Activated CD8-positive, alpha-beta T cell treated with anti-CD3 and anti-CD28 coated beads, Interleukin-2, amount 10 ng/mL, durations not matched to agents 7 days and 5 days (primary cell): ENCODE measurements at regions of chr12 and their contacts with region 1.

Region 1: GRCh38 chr12:94207849-94208621 is 59.7 kb downstream of the PLXNC1 start:
- DNase-seq: peak; percentile 51
- ATAC-seq: peak; percentile 77
- H3K4me3 Mint-ChIP-seq: peak overlapping the region; percentile 77
- H3K27ac Mint-ChIP-seq: peak overlapping the region; percentile 97
- H3K4me1 Mint-ChIP-seq: peaks cover 69% of the 10 kb centered on the region
- H3K27me3 Mint-ChIP-seq: no peaks in the 10 kb centered on the region

Region 2: DNA sequence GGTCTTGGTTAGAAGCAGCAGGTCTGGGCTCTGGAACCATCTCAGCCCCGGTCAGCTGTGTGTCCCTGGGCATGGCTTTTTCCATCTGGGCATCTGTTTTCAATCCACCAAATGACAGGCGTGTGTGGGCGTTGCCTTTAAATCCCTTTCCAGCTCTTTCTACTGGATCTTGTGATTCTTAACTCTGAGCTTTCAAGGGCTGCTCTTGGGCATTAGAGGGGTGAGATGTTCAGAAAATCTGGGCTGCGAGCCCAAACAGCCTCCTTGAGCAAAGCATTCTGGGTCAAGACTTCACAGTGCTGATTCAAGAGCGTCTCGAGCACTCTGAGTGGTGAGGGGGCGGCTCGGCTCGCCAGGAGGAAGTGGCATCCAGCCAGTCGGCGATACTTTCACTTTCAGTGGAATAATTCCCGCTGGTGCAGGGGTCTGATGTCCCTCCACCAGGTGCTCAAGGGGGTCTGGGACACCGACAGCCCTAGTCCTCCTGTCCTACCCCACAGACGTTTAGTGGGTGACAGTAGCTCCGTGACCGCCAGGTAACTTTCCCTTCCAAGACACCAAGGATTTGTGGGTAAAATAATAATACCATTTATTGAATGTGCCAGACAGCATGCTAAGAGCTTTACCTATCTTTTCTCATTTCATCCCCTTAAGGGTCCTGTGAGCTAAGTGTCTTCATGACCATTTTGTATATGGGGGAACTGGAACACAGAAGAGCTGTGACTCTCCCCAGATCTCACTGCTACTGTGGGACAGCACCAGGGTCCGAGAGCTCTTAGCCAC is 54.4 kb after region 1 on chr12:
- CTCF ChIA-PET with region 1: interaction called, 7 read pairs
- POLR2A ChIA-PET with region 1: interaction called, 18 read pairs
- DNase-seq: peak; percentile 81
- ATAC-seq: peak; percentile 90
- H3K4me3 Mint-ChIP-seq: peak overlapping the region; percentile 83
- H3K27ac Mint-ChIP-seq: peak overlapping the region; percentile 95
- H3K4me1 Mint-ChIP-seq: peaks cover 58% of the 10 kb centered on the region
- H3K27me3 Mint-ChIP-seq: no peaks in the 10 kb centered on the region

Region 3: DNA sequence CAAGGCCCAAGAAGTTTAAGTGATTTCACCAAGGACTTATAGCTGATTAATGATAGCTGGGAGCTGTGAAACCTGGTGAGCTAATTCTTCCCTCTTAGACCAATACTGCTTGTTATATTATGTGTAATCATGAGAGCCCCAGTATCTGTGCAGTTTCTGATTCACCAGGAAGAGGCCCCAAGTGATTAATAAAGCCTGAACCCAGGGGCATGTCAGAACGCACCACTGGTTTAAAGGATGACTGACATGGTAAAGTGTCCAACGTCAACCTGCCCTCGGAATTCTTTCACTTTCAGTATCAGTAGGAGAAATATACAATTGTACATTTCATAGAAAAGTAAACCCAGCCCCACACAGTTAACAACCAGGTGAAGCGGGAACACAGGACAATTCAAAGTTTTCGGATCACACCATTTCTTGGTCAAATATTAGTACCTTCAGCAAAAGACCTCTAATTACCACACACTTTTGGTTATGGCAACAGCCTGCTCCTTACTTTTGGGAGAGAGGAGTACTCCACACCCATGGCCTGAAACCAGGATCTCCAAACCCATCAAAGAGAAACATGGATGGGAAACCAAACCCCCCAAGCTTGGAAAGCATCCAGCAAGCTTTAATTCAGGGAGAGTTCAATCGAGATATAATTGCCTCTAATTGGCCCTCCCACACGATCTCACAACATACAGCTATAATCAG is 413.8 kb after region 1 on chr12:
- CTCF ChIA-PET with region 1: no interaction called
- POLR2A ChIA-PET with region 1: no interaction called
- DNase-seq: peak; percentile 62
- ATAC-seq: peak; percentile 96
- H3K4me3 Mint-ChIP-seq: peak overlapping the region; percentile 42
- H3K27ac Mint-ChIP-seq: peak overlapping the region; percentile 81
- H3K4me1 Mint-ChIP-seq: peaks cover 16% of the 10 kb centered on the region
- H3K27me3 Mint-ChIP-seq: no peaks in the 10 kb centered on the region